ENCODE measurements at regions of chr5 and their contacts with region 1.

Region 1: DNA sequence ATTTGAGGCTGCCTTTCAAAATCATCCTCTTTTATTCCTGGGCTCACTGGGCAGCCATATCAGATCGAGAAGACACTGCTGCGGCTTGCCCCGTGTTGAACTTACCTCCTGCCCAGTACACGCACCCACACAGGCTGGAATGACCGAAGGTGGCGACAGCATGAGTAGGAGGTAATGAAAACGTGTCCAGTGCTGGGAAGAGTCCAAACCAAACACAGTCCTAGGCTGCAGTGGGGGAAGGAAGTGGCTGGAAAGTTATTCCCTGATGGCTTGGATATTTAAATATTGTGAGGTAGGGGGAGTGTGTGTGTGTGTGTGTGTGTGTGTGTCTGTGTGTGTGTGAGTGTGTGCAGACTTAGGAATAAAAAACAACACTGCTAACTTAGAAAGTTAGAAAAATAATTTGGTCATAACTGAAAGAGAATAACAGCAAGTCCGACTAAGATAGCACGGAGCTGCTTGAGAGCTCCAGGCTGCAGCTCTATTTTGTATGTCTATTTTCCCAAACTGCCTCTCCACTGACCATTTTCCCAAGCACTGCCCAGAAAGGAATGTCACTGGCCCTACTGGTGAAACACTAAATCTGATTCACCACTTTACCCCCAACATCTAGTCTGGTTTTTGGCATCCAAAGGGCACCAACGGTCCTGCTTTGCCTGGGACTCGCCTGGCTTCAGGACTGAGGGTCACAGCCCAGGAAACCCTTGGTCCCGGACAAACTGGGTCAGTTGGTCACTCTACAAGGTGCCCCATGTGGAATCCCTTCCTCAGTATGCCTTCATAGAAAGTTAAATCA is 41.2 kb downstream of the ANKH start:
- DNase-seq: no peak
- ATAC-seq: no peak
- H3K4me3 ChIP-seq: no peak overlapping the region
- H3K27ac ChIP-seq: no peak overlapping the region
- H3K4me1 ChIP-seq: no peaks in the 10 kb centered on the region
- CTCF ChIP-seq: no peak
- EP300 ChIP-seq: no peak
- POLR2A ChIP-seq: no peak
- RAD21 ChIP-seq: no peak

Region 2: GRCh38 chr5:14714706-14715105 is 115.7 kb before region 1 on chr5:
- CTCF ChIA-PET with region 1: no interaction called
- POLR2A ChIA-PET with region 1: no interaction called
- DNase-seq: no peak
- ATAC-seq: peak in 1 of 2 experiments; percentile 42; a peak in 3 of 6 replicates
- H3K4me3 ChIP-seq: no peak overlapping the region
- H3K27ac ChIP-seq: no peak overlapping the region
- H3K4me1 ChIP-seq: no peaks in the 10 kb centered on the region
- CTCF ChIP-seq: no peak
- EP300 ChIP-seq: no peak
- POLR2A ChIP-seq: no peak
- RAD21 ChIP-seq: no peak

Region 3: GRCh38 chr5:14996997-14997396 is 166.6 kb after region 1 on chr5:
- CTCF ChIA-PET with region 1: no interaction called
- POLR2A ChIA-PET with region 1: interaction called, 10 read pairs
- DNase-seq: no peak
- ATAC-seq: no peak
- H3K4me3 ChIP-seq: no peak overlapping the region
- H3K27ac ChIP-seq: no peak overlapping the region
- H3K4me1 ChIP-seq: no peaks in the 10 kb centered on the region
- CTCF ChIP-seq: no peak
- EP300 ChIP-seq: no peak
- POLR2A ChIP-seq: no peak
- RAD21 ChIP-seq: no peak

Measured in A549 (cell line).